ENCODE measurements at regions of chr19 and their contacts with region 1.

Region 1: DNA sequence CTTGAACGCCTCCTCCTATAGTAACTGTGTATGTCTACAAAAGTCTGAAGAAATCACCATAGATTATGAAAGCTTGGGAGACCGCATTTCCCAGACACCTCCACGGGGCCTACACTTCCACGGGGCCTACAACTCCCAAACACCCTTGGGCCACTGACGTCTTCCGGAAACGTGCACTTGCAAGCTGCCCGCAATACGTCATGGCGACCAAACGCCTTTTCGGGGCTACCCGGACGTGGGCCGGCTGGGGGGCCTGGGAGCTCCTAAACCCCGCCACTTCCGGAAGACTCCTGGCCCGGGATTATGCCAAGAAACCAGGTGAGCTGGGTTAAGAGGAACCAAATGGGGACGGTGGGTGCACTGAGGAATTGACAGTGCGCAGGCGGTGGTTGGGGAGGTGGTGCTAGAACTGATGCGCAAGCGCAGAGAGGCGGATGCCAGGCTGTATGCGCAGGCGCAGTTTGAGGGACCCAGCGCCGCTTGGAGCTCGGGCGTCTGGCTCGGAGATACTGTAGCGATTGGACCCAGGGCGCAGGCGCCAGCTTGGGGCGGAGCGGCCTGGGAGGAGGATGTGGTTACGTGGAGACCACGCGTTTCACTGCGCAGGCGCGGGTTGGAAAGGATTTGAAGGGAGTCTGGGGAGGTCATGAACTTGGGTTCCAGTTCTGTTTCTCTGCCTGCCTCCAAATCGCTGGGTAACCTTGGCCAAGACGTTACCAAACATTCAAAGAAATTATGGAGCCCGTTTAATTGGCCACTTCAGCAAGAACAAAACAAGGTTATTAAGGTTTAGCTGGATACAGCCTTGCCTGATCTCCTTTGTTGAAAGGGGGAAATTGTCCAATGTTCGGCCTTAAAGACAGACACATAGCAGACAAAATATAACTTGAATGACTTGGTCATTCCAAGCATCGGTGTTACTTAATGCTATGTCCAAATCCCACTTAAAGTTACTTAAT is at the start of gene MRPL54:
- DNase-seq: peak; percentile 97 to 100
- H3K4me3 ChIP-seq: peak within 1 kb of the TSS; percentile 88 to 95
- H3K27ac ChIP-seq: peak within 1 kb of the TSS; percentile 87 to 98
- H3K4me1 ChIP-seq: peaks cover 9 to 22% of the 10 kb centered on the region in 2 donors
- H3K27me3 ChIP-seq: no peaks in the 10 kb centered on the region
- CTCF ChIP-seq: no peak
- total RNA-seq, gene MRPL54: 34.9 TPM

Region 2: DNA sequence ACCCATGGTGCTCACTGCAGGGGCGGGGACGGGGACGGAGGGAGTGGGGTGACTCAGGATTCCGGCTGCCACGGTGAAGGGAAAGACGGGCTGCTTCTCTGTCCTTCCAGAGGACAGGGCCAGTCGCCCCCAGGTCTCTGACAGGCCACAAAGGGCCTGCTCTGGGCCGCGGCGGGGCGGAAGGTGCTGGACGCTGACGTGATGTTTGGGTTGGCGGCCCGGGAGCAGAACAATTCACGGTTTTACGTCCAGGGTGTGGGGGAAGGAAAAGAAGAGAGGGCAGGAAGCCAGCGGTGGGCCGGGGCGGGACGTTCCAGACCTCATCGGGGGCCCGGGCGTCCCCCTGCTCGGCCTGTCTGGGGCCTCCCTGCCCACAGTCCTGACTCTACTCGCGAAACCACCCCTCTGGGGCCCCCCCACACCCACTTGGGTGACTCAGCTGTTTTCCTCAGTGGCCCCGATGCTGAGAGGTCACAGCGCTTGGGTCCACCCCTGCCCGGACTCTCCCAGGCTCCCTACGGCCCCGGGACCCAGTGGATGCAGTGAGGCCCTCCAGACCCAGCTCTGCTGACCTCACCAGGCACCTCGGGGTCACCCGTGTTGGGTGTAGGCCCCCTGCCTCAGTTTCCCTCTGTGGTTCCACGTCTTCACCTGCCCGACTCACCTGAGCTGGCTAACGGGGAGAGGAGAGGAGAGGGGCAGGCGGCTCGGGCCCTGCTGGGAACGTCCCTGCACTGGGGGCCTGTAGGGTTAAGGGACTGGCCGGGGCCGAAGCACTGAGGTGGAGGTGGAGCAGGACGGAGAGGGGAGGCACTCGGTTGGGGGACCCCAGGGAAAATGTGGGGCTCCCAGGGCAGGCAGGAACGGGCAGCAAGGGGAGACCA is 91.7 kb before region 1 on chr19:
- intact Hi-C with region 1: loop called (anchors 2 kb)
- DNase-seq: peak; percentile 85 to 94
- H3K4me3 ChIP-seq: peak overlapping the region; percentile 31 to 60
- H3K27ac ChIP-seq: peak overlapping the region; percentile 99
- H3K4me1 ChIP-seq: peaks cover 18 to 48% of the 10 kb centered on the region in 2 donors
- H3K27me3 ChIP-seq: no peaks in the 10 kb centered on the region
- CTCF ChIP-seq: no peak

Region 3: GRCh38 chr19:3852614-3853254 is 90.0 kb after region 1 on chr19:
- intact Hi-C with region 1: no loop called
- DNase-seq: no peak
- H3K4me3 ChIP-seq: no peak overlapping the region
- H3K27ac ChIP-seq: no peak overlapping the region
- H3K4me1 ChIP-seq: no peaks in the 10 kb centered on the region
- H3K27me3 ChIP-seq: no peaks in the 10 kb centered on the region
- CTCF ChIP-seq: no peak

Region 4: GRCh38 chr19:3923912-3924311 is 161.1 kb after region 1 on chr19:
- intact Hi-C with region 1: no loop called
- DNase-seq: no peak
- H3K4me3 ChIP-seq: no peak overlapping the region
- H3K27ac ChIP-seq: no peak overlapping the region
- H3K4me1 ChIP-seq: no peaks in the 10 kb centered on the region
- H3K27me3 ChIP-seq: no peaks in the 10 kb centered on the region
- CTCF ChIP-seq: no peak

Region 5: DNA sequence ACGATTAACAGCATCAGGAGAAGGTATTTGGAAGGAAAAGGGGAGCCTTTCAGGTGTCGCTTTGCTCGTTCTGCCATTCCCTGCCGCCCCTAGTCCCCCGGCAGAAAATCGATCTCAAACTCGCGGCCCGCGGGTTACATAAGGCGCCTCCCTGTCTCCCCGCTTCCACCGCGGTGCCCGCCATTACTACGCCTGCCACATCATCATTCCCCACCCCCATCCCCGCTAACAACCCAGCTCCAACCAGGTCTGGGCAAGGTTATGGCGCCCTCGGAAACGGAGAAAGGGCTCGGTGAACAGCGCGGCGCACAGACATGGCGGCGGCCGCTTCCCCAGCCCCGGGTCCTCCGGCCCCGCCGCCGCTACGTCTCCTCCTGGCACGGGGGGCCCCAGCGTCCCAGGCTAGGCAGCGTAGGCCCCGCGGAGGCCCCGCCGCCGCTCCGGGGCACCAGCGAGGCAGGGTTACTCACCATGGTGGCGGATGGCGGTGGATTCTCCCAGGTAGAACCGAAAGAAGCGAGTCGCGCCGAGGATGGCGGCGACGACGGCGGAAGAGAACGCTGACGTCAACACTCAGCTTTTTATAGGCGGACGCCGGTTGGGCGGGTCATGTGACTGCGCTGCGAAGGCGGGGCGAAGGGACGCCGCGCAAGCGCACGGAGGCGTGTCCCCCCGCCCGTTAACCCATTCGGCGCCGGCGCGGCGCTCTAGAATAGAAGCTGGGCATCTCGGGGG is 222.3 kb after region 1 on chr19 and contains the start of gene EEF2:
- intact Hi-C with region 1: loop called (anchors 2 kb)
- DNase-seq: peak in 1 of 2 donors; percentile 92
- H3K4me3 ChIP-seq: peak within 1 kb of the TSS; percentile 89 to 96
- H3K27ac ChIP-seq: peak within 1 kb of the TSS; percentile 98
- H3K4me1 ChIP-seq: peaks cover 8 to 27% of the 10 kb centered on the region in 2 donors
- H3K27me3 ChIP-seq: no peaks in the 10 kb centered on the region
- CTCF ChIP-seq: no peak
- total RNA-seq, gene EEF2: 1,544 TPM

Region 6: DNA sequence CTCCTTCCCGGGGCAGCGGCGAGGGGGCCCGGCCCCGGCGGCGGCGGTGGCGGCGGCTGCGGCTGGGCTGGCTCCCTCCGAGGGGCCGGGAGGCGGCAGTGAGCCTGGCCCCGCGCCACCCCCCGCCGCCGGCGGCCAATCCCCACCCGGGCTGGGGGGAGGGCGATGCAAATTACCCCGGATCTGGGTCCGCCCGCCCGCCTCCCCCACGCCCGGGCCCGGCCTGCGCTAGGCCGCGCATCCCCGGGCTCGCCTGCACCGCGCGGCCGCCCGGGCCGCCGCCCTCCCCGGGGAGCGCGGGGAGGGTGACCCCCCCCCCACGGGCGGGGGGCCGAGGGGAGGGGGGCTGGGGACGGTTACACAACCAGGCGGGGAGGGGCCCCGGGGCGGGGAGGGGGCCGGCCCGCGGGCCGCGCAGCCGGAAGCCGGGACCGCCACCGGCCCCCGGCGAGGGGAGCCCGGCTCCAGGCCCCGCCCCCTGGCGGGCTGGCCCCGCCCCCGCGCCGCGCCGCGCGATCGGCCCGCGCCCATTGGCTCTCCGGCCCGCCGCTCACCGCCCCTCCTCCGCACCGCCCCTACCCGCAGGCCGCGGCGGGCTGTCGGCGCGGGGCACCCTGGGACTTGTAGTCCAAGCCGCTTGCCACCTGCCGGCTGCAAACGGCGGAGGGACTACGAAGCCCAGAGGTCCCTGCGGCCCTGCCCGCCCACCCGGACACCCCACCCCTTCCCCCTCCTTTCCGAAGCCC is 302.8 kb after region 1 on chr19:
- intact Hi-C with region 1: loop called (anchors 5 kb)
- DNase-seq: peak; percentile 77 to 98
- H3K4me3 ChIP-seq: peak overlapping the region; percentile 92 to 98
- H3K27ac ChIP-seq: peak overlapping the region; percentile 78 to 90
- H3K4me1 ChIP-seq: peaks cover 31 to 34% of the 10 kb centered on the region in 2 donors
- H3K27me3 ChIP-seq: no peaks in the 10 kb centered on the region
- CTCF ChIP-seq: no peak

Region 7: GRCh38 chr19:4182084-4182810 is 419.5 kb after region 1 on chr19 and contains the starts of genes ANKRD24 and SIRT6:
- intact Hi-C with region 1: loop called (anchors 5 kb)
- DNase-seq: peak; percentile 78 to 97
- H3K4me3 ChIP-seq: peak within 1 kb of the TSS; percentile 75 to 96
- H3K27ac ChIP-seq: peak within 1 kb of the TSS; percentile 65 to 74
- H3K4me1 ChIP-seq: peaks cover 12 to 14% of the 10 kb centered on the region in 2 donors
- H3K27me3 ChIP-seq: no peaks in the 10 kb centered on the region
- CTCF ChIP-seq: no peak
- total RNA-seq, gene ANKRD24: not detected
- total RNA-seq, gene SIRT6: 5.9 TPM

Measured in ascending aorta (tissue), 2 donors.